ENCODE measurements at regions of chr7 and their contacts with region 1.

Region 1: DNA sequence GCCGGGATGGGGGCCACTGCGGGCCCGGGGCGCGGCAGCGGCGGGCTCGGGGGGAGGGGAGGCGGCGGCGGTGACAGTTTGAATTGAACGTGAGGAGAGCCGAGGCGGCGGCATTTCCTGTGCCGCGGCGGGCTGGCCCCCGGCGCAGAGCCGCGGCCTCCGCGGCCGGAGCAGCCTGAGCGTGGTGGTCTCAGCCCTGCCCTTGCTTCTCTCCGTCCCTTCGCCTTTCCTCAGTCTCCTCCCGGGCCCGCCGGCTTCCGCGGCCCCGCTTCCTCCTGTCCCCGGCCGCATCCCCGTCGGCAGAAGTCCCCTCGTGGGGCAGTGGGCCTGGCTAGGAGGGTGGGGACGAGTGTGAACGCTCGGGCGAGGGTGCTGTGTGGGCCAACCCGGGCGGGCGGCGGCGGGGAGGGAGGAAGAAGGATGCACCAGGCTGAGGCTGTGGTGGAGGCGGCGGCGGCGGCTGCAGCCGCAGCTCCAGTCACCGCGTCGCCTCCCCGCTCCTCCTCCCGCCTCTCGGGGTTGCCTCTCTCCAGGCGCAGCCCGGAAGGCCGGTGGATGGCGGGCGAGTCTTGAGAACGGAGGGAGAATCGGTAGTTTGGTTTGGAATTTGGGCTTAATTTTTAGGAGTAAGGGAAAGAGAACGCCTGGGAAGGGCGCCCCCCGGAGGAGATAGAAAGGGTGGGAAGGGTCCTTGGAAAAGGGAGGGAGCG is 690 bp downstream of the SEPTIN7 start:
- DNase-seq: peak; percentile 59 to 86 (median 71)
- ATAC-seq: peak; percentile 48 to 53 (median 52)
- H3K4me3 ChIP-seq: peak overlapping the region; percentile 76 to 88
- H3K4me3 Mint-ChIP-seq: peak overlapping the region; percentile 93 to 97 (median 93)
- H3K27ac ChIP-seq: peak overlapping the region; percentile 98
- H3K27ac Mint-ChIP-seq: peak overlapping the region; percentile 92 to 99
- H3K4me1 ChIP-seq: peaks cover 17 to 35% of the 10 kb centered on the region in 2 experiments
- H3K4me1 Mint-ChIP-seq: peaks cover 48 to 56% (median 52%) of the 10 kb centered on the region in 3 donors
- H3K27me3 ChIP-seq: no peaks in the 10 kb centered on the region
- H3K27me3 Mint-ChIP-seq: no peaks in the 10 kb centered on the region

Region 2: GRCh38 chr7:35694781-35695472 is 106.6 kb before region 1 on chr7 and contains the start of gene HERPUD2:
- CTCF ChIA-PET with region 1: interaction called, 3 to 20 read pairs
- POLR2A ChIA-PET with region 1: interaction called, 5 to 22 read pairs
- DNase-seq: peak; percentile 78 to 96 (median 91)
- ATAC-seq: peak; percentile 87 to 88 (median 88)
- H3K4me3 ChIP-seq: peak within 1 kb of the TSS; percentile 92 to 96
- H3K4me3 Mint-ChIP-seq: peak within 1 kb of the TSS; percentile 97 to 99 (median 97)
- H3K27ac ChIP-seq: peak within 1 kb of the TSS; percentile 94
- H3K27ac Mint-ChIP-seq: peak within 1 kb of the TSS; percentile 98 to 99
- H3K4me1 ChIP-seq: peaks cover 26 to 32% of the 10 kb centered on the region in 2 experiments
- H3K4me1 Mint-ChIP-seq: peaks cover 48 to 64% (median 57%) of the 10 kb centered on the region in 3 donors
- H3K27me3 ChIP-seq: no peaks in the 10 kb centered on the region
- H3K27me3 Mint-ChIP-seq: no peaks in the 10 kb centered on the region
- total RNA-seq, gene HERPUD2: 58.4 to 122 (median 67.5) TPM

Region 3: GRCh38 chr7:35729061-35729783 is 72.3 kb before region 1 on chr7:
- CTCF ChIA-PET with region 1: interaction called, 6 to 23 read pairs
- POLR2A ChIA-PET with region 1: interaction called, 6 to 17 read pairs
- DNase-seq: peak in 31 of 35 experiments; percentile 19 to 75 (median 43)
- ATAC-seq: peak; percentile 34 to 66 (median 42)
- H3K4me3 ChIP-seq: no peak overlapping the region
- H3K4me3 Mint-ChIP-seq: peak overlapping the region in 1 of 3 donors; percentile 17
- H3K27ac ChIP-seq: peak overlapping the region; percentile 81
- H3K27ac Mint-ChIP-seq: peak overlapping the region; percentile 35 to 65
- H3K4me1 ChIP-seq: peaks cover 18 to 66% of the 10 kb centered on the region in 2 experiments
- H3K4me1 Mint-ChIP-seq: peaks cover 48 to 63% (median 59%) of the 10 kb centered on the region in 3 donors
- H3K27me3 ChIP-seq: no peaks in the 10 kb centered on the region
- H3K27me3 Mint-ChIP-seq: peaks cover 0 to 2% of the 10 kb centered on the region in 2 donors

Region 4: GRCh38 chr7:35781200-35781701 is 20.3 kb before region 1 on chr7:
- CTCF ChIA-PET with region 1: no interaction called
- POLR2A ChIA-PET with region 1: no interaction called
- DNase-seq: no peak
- ATAC-seq: no peak
- H3K4me3 ChIP-seq: no peak overlapping the region
- H3K4me3 Mint-ChIP-seq: no peak overlapping the region
- H3K27ac ChIP-seq: no peak overlapping the region
- H3K27ac Mint-ChIP-seq: no peak overlapping the region
- H3K4me1 ChIP-seq: no peaks in the 10 kb centered on the region
- H3K4me1 Mint-ChIP-seq: no peaks in the 10 kb centered on the region
- H3K27me3 ChIP-seq: no peaks in the 10 kb centered on the region
- H3K27me3 Mint-ChIP-seq: no peaks in the 10 kb centered on the region

Region 5: DNA sequence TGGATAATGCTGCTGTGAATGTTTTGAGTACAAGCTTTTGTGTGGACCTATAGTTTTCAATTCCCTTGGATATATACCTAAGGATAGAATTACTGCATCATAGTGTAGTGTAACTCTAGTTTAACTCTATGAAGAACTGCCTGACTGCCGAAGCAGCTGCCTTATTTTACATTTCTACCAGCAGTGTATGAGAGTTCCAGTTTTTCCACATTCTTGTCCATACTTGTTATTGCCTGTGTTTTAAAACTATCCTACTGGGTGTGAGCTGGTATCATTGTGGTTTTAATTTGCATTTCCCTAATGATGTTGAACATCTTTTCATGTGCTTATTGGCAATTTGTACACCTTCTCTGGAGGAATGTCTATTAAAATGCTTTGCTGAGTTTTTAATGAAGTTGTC is 15.0 kb after region 1 on chr7:
- CTCF ChIA-PET with region 1: interaction called, 3 to 5 read pairs
- POLR2A ChIA-PET with region 1: interaction called, 4 to 12 read pairs
- DNase-seq: no peak
- ATAC-seq: no peak
- H3K4me3 ChIP-seq: no peak overlapping the region
- H3K4me3 Mint-ChIP-seq: peak overlapping the region in 1 of 3 donors; percentile 10
- H3K27ac ChIP-seq: no peak overlapping the region
- H3K27ac Mint-ChIP-seq: no peak overlapping the region
- H3K4me1 ChIP-seq: peaks cover 0 to 12% of the 10 kb centered on the region in 2 experiments
- H3K4me1 Mint-ChIP-seq: peaks cover 74 to 90% (median 90%) of the 10 kb centered on the region in 3 donors
- H3K27me3 ChIP-seq: no peaks in the 10 kb centered on the region
- H3K27me3 Mint-ChIP-seq: no peaks in the 10 kb centered on the region

Region 6: DNA sequence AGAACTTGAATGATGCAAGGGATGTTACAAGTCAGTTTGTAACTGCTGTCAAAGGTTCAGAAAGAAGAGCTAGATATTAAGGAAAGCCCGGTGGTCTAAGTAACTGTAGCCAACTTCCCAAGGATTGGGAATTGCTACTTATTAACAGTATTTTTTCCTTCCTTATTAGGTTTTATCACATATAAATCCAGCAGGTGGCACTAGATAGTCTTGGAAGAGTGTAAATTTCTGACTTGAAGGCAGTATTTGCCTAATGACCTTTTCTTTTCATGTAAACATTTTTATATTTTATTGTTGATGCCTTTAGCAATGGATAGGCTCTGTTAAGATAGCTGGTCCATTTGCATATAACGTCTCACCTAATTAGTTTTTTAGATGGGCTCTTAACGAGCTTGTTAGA is 639.3 kb after region 1 on chr7:
- CTCF ChIA-PET with region 1: no interaction called
- POLR2A ChIA-PET with region 1: no interaction called
- DNase-seq: peak in 1 of 35 experiments; percentile 24
- ATAC-seq: no peak
- H3K4me3 ChIP-seq: no peak overlapping the region
- H3K4me3 Mint-ChIP-seq: no peak overlapping the region
- H3K27ac ChIP-seq: no peak overlapping the region
- H3K27ac Mint-ChIP-seq: no peak overlapping the region
- H3K4me1 ChIP-seq: no peaks in the 10 kb centered on the region
- H3K4me1 Mint-ChIP-seq: no peaks in the 10 kb centered on the region
- H3K27me3 ChIP-seq: no peaks in the 10 kb centered on the region
- H3K27me3 Mint-ChIP-seq: no peaks in the 10 kb centered on the region